Activated CD4-positive, alpha-beta T cell treated with anti-CD3 and anti-CD28 coated beads for 36 hours (primary cell): ENCODE measurements at regions of chr4 and their contacts with region 1.

Region 1: DNA sequence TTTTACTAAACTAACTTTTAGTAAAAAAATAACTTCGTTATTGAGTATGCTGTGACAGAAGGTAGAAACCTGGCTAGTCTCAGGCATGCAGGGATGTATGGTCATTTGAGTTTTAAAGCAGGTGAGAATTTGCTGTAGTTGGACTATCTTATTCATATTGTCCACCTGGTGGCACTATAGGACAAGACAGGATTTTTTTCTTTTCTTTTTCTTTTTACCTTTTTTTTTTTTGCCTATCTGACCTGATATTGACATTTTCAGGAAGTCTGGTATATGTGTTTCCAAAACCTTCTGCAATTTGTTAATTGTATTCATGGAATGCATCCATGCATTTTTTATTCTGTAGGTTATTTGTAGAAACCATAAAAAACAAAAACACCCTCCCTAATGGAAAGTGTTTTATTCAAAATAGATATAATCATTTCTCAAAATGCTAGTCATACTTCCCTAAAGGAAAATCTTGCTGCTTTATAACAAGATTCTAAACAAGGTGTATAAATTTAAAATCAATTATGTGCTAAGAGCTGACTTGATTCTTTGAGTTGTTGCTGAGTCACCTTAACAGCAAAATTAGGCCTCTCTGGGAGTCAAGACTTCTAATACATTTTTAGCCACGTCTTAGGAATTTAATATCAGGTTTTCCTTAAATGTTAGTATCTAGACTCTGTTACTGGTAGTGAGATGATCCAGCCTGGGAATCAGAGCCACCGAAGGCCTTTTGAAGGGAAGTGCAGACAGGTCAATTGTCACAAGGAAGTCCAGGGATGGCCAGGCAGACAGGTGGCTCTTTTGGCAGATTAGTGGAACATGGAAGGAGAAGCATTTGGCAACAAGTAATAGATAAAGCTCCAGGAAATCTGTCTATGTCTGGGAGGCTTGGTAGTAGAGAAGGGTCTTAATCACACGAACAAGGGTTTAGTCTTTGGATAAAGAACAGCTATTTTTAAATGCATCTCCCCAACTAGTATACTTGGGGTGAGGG is 201.3 kb upstream of the GNPDA2 start:
- DNase-seq: no peak
- ATAC-seq: no peak
- H3K4me3 Mint-ChIP-seq: no peak overlapping the region
- H3K27ac Mint-ChIP-seq: no peak overlapping the region
- H3K4me1 Mint-ChIP-seq: no peaks in the 10 kb centered on the region
- H3K27me3 Mint-ChIP-seq: no peaks in the 10 kb centered on the region

Region 2: DNA sequence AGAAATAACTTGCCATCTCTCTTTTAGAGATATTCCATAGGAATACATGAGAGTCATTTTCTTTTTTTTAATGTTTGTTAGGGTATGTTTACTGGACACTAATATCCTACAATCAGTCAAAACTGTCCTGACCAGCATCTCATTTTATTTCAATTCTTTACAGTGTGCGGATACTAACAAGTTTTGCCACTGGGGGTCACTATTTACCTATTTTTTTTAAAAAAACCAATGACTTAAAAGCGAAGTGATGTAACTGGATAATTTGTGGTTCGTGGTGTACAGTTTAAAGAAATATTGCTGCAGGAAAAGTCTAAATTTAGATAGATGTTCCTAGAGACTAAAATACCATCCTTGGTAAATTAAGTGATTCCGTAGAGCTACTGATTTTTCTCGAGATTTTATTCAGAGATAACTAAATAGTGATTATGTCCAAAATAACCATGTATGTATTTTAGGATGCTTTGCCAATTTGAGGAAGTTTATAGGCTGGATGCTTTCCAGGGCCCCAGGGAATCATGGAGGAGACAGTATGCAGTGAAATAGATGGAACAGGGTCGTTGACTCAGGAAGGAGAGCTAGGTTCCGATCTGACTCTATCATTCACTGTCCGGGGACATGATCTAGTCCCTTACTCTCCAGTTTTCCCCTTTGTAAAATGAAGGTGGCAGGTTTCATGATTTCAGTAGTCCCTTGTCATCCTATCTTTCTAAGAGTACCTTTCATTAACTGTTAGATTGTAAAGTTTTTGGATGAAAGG is 167.4 kb before region 1 on chr4:
- CTCF ChIA-PET with region 1: no interaction called
- POLR2A ChIA-PET with region 1: no interaction called
- intact Hi-C with region 1: loop called in 1 of 2 experiments (anchors 10 kb)
- DNase-seq: peak; percentile 10
- ATAC-seq: peak; percentile 53
- H3K4me3 Mint-ChIP-seq: no peak overlapping the region
- H3K27ac Mint-ChIP-seq: no peak overlapping the region
- H3K4me1 Mint-ChIP-seq: no peaks in the 10 kb centered on the region
- H3K27me3 Mint-ChIP-seq: peaks cover 17% of the 10 kb centered on the region

Region 3: DNA sequence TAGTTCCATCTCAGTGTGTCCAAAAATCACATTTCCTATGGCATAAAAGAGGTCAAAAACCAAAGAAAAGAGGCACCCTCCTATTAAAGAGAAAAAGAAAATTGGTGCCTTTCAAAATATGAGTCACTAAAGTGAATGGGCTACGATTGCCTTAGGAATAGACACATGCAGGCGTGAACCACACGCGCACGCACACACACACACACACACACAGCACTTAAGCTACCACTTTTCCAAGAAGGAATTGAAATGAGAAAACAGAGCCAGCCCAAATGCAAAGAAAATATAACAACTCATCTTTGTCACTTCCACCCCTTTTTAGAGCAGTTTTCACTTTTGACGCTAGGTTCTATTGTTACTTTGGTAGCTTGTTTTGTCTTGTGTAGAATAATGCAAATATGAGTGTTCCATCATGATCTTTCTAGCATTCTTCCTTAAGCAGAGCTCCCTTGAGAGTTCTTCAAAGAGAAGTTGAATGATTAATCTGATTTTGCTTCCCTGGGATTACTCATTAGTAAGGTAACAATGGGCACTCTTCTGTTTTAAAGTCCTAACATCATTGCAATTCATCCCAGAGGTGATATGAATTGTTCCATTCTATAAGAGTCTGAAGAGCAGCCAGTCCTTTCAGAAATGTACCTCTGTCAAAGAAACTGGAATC is 37.9 kb after region 1 on chr4:
- CTCF ChIA-PET with region 1: no interaction called
- POLR2A ChIA-PET with region 1: no interaction called
- intact Hi-C with region 1: no loop called
- DNase-seq: no peak
- ATAC-seq: no peak
- H3K4me3 Mint-ChIP-seq: no peak overlapping the region
- H3K27ac Mint-ChIP-seq: no peak overlapping the region
- H3K4me1 Mint-ChIP-seq: no peaks in the 10 kb centered on the region
- H3K27me3 Mint-ChIP-seq: no peaks in the 10 kb centered on the region

Region 4: DNA sequence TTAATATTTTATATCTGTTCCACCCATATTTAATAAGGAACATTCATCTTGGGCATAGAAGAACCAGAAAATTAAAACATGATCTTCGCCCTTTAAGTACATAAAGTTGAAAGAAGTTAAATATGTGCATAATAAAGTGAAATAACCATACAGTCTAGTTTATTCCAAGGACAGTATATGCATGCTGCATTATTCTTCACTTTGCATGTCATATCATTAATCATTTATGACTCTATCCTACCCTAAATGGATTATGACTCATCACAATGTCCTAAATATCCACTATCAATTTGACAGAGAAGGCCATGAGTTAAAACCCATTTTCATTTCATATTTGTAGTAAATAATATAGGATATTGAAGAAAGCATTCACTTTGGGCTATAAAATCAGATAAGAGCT is 375.1 kb after region 1 on chr4:
- CTCF ChIA-PET with region 1: no interaction called
- POLR2A ChIA-PET with region 1: no interaction called
- intact Hi-C with region 1: no loop called
- DNase-seq: no peak
- ATAC-seq: no peak
- H3K4me3 Mint-ChIP-seq: no peak overlapping the region
- H3K27ac Mint-ChIP-seq: no peak overlapping the region
- H3K4me1 Mint-ChIP-seq: no peaks in the 10 kb centered on the region
- H3K27me3 Mint-ChIP-seq: no peaks in the 10 kb centered on the region

Region 5: GRCh38 chr4:46270986-46271596 is 1343.4 kb after region 1 on chr4:
- CTCF ChIA-PET with region 1: no interaction called
- POLR2A ChIA-PET with region 1: no interaction called
- intact Hi-C with region 1: loop called in 1 of 2 experiments (anchors 1 kb)
- DNase-seq: no peak
- ATAC-seq: no peak
- H3K4me3 Mint-ChIP-seq: no peak overlapping the region
- H3K27ac Mint-ChIP-seq: no peak overlapping the region
- H3K4me1 Mint-ChIP-seq: no peaks in the 10 kb centered on the region
- H3K27me3 Mint-ChIP-seq: no peaks in the 10 kb centered on the region

Region 6: GRCh38 chr4:46648088-46648744 is 1720.5 kb after region 1 on chr4:
- CTCF ChIA-PET with region 1: no interaction called
- POLR2A ChIA-PET with region 1: no interaction called
- intact Hi-C with region 1: loop called in 1 of 2 experiments (anchors 5 kb)
- DNase-seq: peak; percentile 20
- ATAC-seq: no peak
- H3K4me3 Mint-ChIP-seq: no peak overlapping the region
- H3K27ac Mint-ChIP-seq: no peak overlapping the region
- H3K4me1 Mint-ChIP-seq: no peaks in the 10 kb centered on the region
- H3K27me3 Mint-ChIP-seq: no peaks in the 10 kb centered on the region